ENCODE measurements at regions of chr4 and their contacts with region 1.

Region 1: GRCh38 chr4:145473203-145473602 is 8.4 kb upstream of the SMAD1 start:
- DNase-seq: no peak
- H3K4me3 ChIP-seq: no peak overlapping the region
- H3K27ac ChIP-seq: no peak overlapping the region
- H3K4me1 ChIP-seq: no peaks in the 10 kb centered on the region
- H3K27me3 ChIP-seq: no peaks in the 10 kb centered on the region
- CTCF ChIP-seq: no peak

Region 2: GRCh38 chr4:145180298-145181090 is 292.7 kb before region 1 on chr4 and contains the start of gene OTUD4:
- intact Hi-C with region 1: loop called (anchors 10 kb)
- DNase-seq: peak; percentile 95 to 97
- H3K4me3 ChIP-seq: peak within 1 kb of the TSS; percentile 84 to 98
- H3K27ac ChIP-seq: peak within 1 kb of the TSS; percentile 97 to 98
- H3K4me1 ChIP-seq: peaks cover 0 to 40% (median 21%) of the 10 kb centered on the region in 4 donors
- H3K27me3 ChIP-seq: no peaks in the 10 kb centered on the region
- CTCF ChIP-seq: no peak

Measured in tibial artery (tissue), 4 donors.